Sciatic nerve (tissue), 2 donors: ENCODE measurements at regions of chr1 and their contacts with region 1.

Region 1: DNA sequence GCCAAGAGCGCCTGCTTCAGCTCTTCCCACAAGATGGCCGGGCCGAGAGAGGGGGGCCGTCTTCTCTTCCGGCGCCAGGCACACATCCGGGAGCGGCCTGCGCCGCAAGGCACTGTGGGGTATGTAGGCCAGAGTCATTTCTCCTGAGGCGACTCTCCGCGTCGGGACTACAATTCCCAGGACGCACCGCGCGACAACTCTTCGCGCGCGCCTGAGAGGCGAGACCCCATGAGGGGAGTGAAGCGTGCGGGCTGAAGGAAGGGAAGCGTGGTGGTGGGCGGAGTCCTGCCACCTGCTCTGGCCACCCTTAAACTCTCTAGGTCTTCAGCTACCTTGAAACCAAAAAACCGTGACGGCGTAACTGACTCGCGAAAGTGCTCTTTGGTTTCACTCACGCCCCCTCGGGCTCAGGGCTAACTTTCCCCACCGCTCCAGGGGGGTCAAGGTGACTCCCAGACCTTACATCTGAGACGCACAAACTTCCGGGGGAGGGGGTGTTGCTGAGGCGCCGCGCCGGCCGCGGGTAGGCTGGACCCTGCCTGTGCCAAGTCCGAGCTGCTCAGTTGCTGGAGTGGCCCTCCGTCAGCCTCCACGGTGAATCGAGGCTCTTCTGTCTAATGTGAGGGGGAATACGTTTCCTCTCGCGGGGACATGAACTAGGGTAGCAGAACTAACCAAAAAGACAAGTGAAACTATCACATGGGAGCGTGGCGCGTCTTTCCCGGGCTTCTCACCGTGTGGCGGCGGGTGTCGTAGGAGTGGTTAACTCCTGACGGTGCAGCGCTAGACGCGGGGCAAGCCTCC is at the start of gene SERBP1:
- DNase-seq: peak; percentile 97
- ATAC-seq: peak; percentile 99
- total RNA-seq, gene SERBP1: 152 TPM

Region 2: DNA sequence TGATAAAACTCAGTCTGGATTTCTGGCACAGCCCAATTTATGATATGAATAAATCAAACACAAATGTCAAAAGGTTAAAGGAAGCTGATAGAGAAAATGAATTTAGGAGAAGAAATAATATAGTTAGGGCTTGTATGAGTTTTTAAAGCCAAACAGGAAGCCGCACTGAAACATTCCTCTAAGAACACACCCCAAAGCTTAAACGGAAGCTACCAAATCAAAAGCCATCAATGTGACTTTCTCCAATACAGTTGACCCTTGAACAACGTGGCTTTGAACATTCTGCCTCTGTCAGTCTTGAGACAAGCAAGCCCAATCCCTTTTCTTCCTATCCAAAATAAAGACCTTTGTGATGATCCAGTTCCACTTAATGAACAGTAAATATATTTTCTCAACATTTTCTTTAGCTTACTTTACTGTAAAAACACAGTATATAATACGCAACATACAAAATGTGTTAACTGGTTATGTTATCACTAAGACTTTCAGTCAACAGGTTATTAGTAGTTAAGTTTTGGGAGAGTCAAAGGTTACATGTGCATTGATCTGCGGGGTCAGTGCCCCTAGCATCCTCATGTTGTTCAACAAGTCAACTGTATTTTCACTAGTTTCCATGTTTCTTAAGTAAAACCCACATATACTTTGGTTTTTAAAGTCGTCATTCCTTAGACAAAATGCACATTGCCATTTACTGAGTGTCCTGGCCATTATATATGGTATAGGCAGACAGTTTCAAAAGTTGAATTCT is 11.5 kb before region 1 on chr1:
- intact Hi-C with region 1: loop called (anchors 1 kb)
- DNase-seq: no peak
- ATAC-seq: no peak

Region 3: DNA sequence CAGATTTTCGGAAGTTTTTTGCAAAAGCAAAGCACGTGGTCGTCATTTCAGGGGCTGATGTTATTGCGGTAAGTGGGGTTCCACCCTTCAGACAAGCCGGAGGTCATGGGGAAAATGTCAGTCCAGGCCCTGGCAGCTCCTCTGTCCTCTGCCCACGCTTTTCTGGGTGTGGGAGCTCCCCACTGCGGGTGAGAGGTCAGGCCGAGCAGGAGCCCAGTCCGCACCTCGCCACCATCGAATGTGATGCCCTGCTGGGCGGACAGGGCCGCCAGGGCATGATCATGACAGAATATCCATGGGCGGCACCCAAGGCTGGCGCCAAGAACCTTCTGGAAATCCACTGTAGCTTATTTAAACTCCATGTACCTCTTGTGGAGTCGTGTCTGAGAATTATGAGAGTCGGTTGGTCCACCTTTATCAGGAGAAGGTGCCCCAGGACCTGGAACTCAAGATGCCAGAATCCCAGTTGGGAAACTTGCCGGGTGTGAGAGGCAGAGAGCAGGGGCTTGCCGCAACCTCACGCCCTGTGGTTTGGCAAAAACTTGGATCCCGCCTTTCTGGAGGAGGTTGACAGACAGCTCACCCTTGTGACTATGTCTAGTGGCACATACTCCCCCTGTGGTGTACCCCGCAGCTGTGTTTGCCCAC is 613.0 kb after region 1 on chr1:
- intact Hi-C with region 1: loop called (anchors 5 kb)
- DNase-seq: no peak
- ATAC-seq: no peak

Region 4: DNA sequence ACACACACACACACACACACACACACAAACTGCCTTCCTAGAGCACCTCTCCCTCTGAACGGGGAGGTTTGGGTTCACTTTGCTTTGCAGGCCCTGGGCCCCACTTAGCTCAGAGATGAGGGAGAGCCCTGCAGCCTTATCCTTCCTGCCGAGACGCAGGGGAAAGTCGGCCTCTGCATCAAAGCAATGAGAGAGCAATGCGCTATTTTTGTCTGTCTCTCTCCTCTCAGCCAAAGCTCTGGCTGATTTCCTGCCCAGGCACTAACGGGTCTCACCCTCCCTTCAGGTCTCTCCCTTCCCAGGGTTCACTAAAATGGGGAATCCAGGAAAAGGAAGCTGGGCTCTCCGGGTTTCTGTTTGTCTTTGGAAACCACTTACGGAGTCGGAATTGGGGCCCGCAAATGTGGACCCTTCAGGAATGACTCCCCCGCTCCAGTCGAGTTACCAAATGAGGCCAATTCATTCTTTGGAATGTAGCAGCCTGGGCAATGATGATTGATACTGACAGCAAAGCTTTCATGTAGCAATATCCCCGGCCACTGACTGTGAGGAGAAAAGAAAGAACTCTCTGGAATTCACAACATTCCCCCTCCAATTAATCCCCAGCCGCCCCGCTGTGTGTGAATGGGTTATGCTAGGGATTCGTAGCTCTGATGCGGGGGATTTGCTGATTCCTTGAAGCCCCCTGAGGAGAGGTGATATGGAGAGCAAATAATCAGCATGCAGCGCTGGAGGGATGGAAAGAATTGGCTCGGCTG is 863.2 kb after region 1 on chr1:
- intact Hi-C with region 1: no loop called
- DNase-seq: no peak
- ATAC-seq: peak; percentile 45